OCI-LY7 (cell line): ENCODE measurements at regions of chr17 and their contacts with region 1.

Region 1: GRCh38 chr17:79305768-79306423 is 231.3 kb downstream of the ENGASE start:
- DNase-seq: peak; percentile 46
- H3K4me3 ChIP-seq: peak overlapping the region; percentile 28
- H3K27ac ChIP-seq: peak overlapping the region; percentile 78
- H3K4me1 ChIP-seq: peaks cover 79% of the 10 kb centered on the region
- CTCF ChIP-seq: no peak

Region 2: GRCh38 chr17:78862073-78863023 is 443.5 kb before region 1 on chr17:
- CTCF ChIA-PET with region 1: no interaction called
- POLR2A ChIA-PET with region 1: no interaction called
- intact Hi-C with region 1: no loop called
- DNase-seq: no peak
- H3K4me3 ChIP-seq: no peak overlapping the region
- H3K27ac ChIP-seq: no peak overlapping the region
- H3K4me1 ChIP-seq: no peaks in the 10 kb centered on the region
- CTCF ChIP-seq: no peak

Region 3: DNA sequence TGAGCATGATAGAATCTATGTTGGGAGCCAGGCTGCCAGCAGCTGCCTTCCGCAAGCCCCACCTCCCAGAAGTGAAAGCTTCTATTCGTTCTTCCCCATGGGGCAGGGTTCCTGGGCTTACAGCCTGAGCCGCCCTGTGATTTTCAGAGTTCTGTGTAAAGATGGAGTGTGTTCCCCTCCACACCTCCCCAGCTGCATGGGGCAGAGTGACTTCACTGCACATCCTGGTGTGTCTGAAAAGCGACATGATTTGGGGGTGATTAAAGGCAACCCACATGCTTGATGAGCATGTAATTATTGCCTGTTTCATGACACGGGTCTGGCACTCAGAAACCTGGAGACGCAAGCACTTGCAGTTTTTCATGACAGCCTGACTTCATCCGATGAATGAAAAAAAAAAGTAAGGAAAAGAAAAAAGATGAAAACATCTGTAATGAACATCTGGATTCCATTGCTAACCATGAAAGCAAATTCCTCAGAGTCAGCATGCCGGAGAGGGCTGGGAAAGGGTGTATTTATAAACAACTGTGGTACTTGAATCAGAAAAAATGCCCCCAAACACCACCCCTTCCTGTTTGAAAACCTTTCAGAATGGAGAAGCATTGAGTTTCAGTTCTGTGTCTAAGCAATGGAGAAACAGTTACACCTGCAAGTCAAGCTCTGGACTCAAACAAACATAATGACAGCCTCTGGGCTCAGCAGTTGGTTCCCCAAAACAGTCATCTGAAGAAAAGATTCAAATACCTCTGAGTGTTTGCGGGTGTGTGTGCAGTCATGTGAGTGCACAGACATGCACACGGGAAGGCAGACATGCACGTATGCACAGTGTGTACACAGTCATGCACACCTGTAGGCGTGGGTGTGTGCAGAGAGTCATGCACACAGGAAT is 34.7 kb after region 1 on chr17:
- CTCF ChIA-PET with region 1: no interaction called
- POLR2A ChIA-PET with region 1: interaction called, 24 read pairs
- intact Hi-C with region 1: loop called (anchors 1 kb)
- DNase-seq: peak; percentile 96
- H3K4me3 ChIP-seq: peak overlapping the region; percentile 61
- H3K27ac ChIP-seq: peak overlapping the region; percentile 98
- H3K4me1 ChIP-seq: peaks cover 58% of the 10 kb centered on the region
- CTCF ChIP-seq: no peak